Activated B cell treated with CpG ODN at 0.5 μM for 24 hours (primary cell): ENCODE measurements at regions of chr7 and their contacts with region 1.

Region 1: DNA sequence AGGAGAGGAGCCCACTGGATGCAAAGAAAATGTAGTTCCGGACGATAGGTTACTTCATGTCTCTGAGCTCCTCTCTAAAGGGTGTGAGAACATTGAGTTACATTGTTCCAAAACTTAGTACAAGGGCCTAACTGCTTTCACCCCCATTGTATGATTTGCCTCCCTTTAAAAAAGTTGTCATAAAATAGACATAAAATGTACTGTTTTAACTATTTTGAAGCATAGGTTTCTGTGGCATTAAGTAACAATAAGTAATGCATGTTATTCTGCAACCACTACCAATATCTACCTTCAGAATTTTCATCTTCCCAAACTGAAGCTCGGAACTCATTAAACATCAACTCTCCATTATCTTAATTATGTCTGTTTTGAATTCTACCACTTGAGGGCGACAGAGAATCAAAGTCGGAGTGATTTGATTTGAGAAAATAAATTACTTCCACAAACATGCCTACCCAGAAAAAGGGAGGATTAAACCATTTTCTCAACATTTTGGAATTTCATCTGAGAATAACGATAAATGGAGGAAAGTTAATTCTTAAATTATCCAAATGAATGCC is 2.7 kb downstream of the IGFBP1 start:
- DNase-seq: no peak
- ATAC-seq: no peak
- H3K4me3 Mint-ChIP-seq: no peak overlapping the region
- H3K27ac Mint-ChIP-seq: no peak overlapping the region
- H3K4me1 Mint-ChIP-seq: no peaks in the 10 kb centered on the region
- H3K27me3 Mint-ChIP-seq: peaks cover 55% of the 10 kb centered on the region
- CTCF ChIP-seq: peak; percentile 78

Region 2: GRCh38 chr7:47088329-47089067 is 1197.5 kb after region 1 on chr7:
- CTCF ChIA-PET with region 1: interaction called, 3 read pairs
- POLR2A ChIA-PET with region 1: no interaction called
- intact Hi-C with region 1: loop called (anchors 1 kb)
- DNase-seq: no peak
- ATAC-seq: peak; percentile 60
- H3K4me3 Mint-ChIP-seq: no peak overlapping the region
- H3K27ac Mint-ChIP-seq: no peak overlapping the region
- H3K4me1 Mint-ChIP-seq: peaks cover 3% of the 10 kb centered on the region
- H3K27me3 Mint-ChIP-seq: peaks cover 5% of the 10 kb centered on the region
- CTCF ChIP-seq: peak; percentile 79

Region 3: DNA sequence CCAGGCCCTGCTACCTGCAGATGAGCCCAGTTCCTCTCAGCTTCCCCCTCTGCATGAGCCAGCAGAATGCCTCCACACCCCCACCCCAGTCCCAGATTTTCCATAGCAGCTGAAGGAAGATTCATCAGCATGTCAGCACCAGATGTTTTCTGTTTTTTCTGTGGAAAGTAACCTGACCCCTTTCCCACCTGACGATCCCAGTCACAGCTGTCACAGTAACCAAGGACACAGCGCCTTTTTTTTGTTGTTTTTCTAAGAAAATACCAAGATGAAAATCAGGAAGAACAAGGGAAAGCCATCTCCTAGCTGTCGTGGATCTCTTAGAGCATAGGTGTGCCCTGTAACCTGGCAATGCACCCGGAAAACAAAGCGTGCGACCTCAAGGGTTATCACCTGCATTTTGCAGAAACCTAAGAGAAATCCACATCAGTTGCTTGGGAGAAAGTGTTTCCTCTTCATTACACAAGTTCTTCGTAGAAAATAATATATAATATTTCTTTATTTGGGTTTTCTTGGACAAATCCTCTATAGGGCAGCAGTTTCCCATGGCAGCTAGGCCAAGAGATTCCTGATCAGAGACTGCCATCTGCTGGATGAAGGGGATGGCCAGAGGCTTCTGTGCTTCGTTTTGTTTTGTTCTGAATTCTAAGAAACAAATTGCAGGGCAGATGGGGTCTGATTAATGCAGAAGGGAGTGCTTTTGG is 1289.0 kb after region 1 on chr7:
- CTCF ChIA-PET with region 1: interaction called, 3 read pairs
- POLR2A ChIA-PET with region 1: no interaction called
- intact Hi-C with region 1: loop called (anchors 1 kb)
- DNase-seq: no peak
- ATAC-seq: no peak
- H3K4me3 Mint-ChIP-seq: no peak overlapping the region
- H3K27ac Mint-ChIP-seq: no peak overlapping the region
- H3K4me1 Mint-ChIP-seq: peaks cover 7% of the 10 kb centered on the region
- H3K27me3 Mint-ChIP-seq: peaks cover 5% of the 10 kb centered on the region
- CTCF ChIP-seq: no peak